WTC11 (cell line): ENCODE measurements at regions of chr3 and their contacts with region 1.

Region 1: GRCh38 chr3:142963516-142964448 is at the start of gene PAQR9:
- DNase-seq: peak; percentile 71
- ATAC-seq: peak; percentile 71
- H3K4me3 Mint-ChIP-seq: peak within 1 kb of the TSS; percentile 90
- H3K27ac Mint-ChIP-seq: peak within 1 kb of the TSS; percentile 49; the same call in 1 of the 2 replicates
- H3K4me1 Mint-ChIP-seq: peaks cover 15% of the 10 kb centered on the region
- H3K27me3 Mint-ChIP-seq: peaks cover 52% of the 10 kb centered on the region
- CTCF ChIP-seq: no peak
- total RNA-seq, gene PAQR9: 2.0 to 2.5 TPM (median 2.4 TPM) in 3 replicates

Region 2: DNA sequence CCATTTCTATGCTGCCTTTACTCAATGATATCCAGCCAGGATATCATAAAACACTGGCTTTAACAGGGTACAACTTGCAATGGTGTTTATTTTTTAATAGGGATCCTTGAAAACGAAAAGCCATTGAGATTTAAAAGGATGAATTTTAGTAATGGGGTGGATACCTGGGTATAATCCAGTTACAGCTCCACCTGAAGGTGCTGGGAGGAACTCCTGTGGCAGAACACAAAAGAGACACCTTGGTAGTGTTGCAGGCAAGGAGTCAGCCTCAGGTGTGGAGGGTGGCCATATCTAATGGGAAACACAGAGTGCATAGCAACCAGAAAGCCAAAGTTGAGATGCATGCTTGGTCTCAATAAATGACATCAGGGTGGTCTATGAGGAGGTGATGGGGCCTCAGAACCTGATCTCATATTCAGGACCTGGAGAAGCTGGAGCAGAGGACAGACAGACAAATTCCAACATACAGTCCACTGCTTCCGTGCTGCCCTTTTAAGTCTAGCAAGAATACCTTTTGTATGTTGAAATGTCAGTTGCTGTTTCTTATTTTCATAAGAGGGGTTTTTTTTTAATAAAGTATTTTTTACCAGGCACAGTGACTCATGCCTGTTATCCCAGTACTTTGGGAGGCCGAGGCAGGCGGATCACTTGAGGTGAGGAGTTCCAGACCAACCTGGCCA is 11.7 kb after region 1 on chr3:
- CTCF ChIA-PET with region 1: interaction called, 11 read pairs
- POLR2A ChIA-PET with region 1: interaction called, 6 read pairs
- DNase-seq: no peak
- ATAC-seq: peak; percentile 93
- H3K4me3 Mint-ChIP-seq: no peak overlapping the region
- H3K27ac Mint-ChIP-seq: no peak overlapping the region
- H3K4me1 Mint-ChIP-seq: no peaks in the 10 kb centered on the region
- H3K27me3 Mint-ChIP-seq: no peaks in the 10 kb centered on the region; the same call in 1 of the 2 replicates
- CTCF ChIP-seq: peak; percentile 22; the same call in 1 of the 2 replicates